ENCODE measurements at regions of chr3 and their contacts with region 1.

Region 1: DNA sequence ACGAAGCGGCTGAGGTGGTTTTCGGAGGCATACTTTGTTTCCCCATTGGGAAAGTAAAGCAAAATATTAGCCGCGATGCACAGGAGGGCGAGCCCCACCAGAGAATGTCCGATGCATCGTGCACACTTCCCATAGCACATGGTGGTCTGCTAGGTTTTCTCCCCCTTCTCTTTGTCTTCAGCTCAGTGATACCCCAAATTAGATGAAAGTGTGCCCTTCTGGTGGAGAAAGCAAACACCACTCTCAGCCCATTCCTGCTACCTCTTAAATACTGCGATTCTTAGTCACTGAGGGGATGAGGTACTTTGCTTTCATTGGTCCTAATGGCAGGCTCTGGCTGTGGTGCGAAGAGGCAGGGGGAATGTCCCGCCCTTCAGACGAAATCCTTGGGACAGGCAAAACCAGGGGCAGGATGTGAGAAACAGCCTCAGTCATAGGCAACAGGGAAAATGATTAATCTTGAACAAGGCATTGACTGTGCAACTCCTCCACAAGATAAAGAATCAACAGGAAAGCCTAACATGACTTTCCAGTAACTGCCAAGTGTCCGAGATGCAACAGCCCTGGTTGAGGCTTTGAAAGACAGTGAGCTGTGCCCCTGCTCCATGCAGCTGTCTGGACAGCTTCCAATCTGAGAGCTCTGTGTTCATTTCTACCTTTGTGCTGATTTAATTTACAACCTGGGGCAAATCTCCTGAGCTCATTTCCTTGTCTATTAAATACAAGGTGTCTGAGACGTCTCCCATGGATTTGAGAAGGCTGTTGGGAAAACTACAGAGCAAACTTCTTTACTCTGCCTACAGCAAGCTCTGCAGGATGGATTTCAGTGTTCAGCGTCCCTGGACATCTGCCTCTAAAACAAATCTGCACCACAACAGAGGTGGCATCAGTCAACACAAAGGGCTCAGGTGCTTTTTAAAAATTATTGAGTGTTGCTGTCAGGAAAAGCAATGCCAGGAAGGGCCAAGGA is at the start of gene TM4SF1:
- DNase-seq: no peak
- H3K4me3 ChIP-seq: no peak within 1 kb of the TSS
- H3K27ac ChIP-seq: no peak within 1 kb of the TSS
- H3K4me1 ChIP-seq: no peaks in the 10 kb centered on the region
- CTCF ChIP-seq: no peak
- total RNA-seq, gene TM4SF1: not detected in 2 replicates

Region 2: DNA sequence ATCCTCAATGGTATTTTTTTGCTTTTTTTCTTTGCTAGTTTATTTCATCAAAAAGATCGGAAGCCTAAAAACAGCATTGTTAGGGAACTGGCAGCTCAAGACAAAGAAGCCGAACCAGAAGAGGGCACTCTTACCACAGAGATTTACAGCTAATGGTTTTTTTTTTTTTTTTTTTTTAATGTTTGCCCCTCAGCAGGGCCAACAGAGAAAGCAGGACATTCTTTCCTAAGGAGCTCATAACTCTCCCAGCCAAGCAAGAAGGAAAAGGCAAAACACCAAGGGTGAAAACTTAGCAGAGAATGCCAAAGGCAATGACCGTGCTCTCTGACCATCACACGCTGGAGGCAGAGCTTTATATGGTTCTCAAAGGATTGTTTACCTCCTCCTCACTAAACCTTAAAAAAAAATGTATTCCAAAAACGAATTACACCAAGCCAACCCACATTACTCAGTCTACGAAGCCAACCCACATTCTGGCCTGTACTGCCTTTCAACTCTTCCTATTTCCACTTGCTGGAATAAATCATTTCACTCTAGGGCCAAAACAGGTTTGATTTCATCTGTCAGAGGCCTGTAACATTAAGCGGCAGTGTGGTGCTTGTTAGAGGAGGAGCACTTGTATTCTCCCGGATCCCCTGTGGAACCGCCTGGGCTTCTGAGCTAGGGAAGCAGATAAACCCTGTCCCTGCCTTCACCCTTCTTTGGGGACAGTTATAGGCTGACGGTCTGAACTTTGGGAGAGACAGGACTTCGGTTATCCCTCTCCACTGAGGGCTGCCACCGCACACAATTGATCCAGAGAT is 421.9 kb before region 1 on chr3:
- CTCF ChIA-PET with region 1: no interaction called
- POLR2A ChIA-PET with region 1: no interaction called
- intact Hi-C with region 1: no loop called
- DNase-seq: peak; percentile 70
- H3K4me3 ChIP-seq: no peak overlapping the region
- H3K27ac ChIP-seq: no peak overlapping the region
- H3K4me1 ChIP-seq: peaks cover 3% of the 10 kb centered on the region
- CTCF ChIP-seq: peak; percentile 91

Region 3: GRCh38 chr3:149342413-149343380 is 35.0 kb before region 1 on chr3:
- CTCF ChIA-PET with region 1: no interaction called
- POLR2A ChIA-PET with region 1: no interaction called
- intact Hi-C with region 1: loop called (anchors 2 kb)
- DNase-seq: no peak
- H3K4me3 ChIP-seq: no peak overlapping the region
- H3K27ac ChIP-seq: no peak overlapping the region
- H3K4me1 ChIP-seq: no peaks in the 10 kb centered on the region
- CTCF ChIP-seq: no peak